Gastrocnemius medialis (tissue), 4 donors: ENCODE measurements at regions of chr14 and their contacts with region 1.

Region 1: GRCh38 chr14:69818757-69819191 is 21.7 kb upstream of the SLC10A1 start:
- DNase-seq: peak; percentile 5 to 22
- ATAC-seq: peak; percentile 62 to 86
- H3K4me3 ChIP-seq: no peak overlapping the region
- H3K27ac ChIP-seq: no peak overlapping the region
- H3K4me1 ChIP-seq: peaks cover 0 to 5% of the 10 kb centered on the region in 2 donors
- H3K27me3 ChIP-seq: no peaks in the 10 kb centered on the region
- CTCF ChIP-seq: peak; percentile 74 to 91 (median 87)
- POLR2A ChIP-seq: no peak

Region 2: DNA sequence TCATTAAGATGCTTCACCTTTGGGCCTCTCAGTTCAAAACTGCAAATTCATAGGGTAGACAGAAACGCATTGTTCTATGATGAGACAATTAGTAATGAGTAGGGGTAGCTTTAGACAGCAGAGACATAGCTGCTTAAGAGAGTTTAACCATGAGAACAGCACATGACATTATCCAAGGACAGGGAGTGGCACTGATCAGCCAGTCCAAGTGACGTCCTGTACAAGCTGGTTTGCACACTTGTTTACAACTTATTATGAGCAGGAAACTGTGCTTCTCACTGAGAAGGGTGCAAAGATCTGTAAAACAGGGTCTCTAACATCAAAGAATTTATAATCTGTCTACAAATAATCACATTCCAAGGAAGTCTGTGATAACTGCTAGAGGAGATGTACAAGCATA is 63.0 kb before region 1 on chr14:
- in situ Hi-C with region 1: no loop called
- intact Hi-C with region 1: no loop called
- DNase-seq: no peak
- ATAC-seq: no peak
- H3K4me3 ChIP-seq: no peak overlapping the region
- H3K27ac ChIP-seq: no peak overlapping the region
- H3K4me1 ChIP-seq: no peaks in the 10 kb centered on the region
- H3K27me3 ChIP-seq: no peaks in the 10 kb centered on the region
- CTCF ChIP-seq: no peak
- POLR2A ChIP-seq: no peak

Region 3: GRCh38 chr14:69879175-69880043 is 60.6 kb after region 1 on chr14 and contains the start of gene SMOC1:
- in situ Hi-C with region 1: no loop called
- intact Hi-C with region 1: loop called (anchors 2 kb)
- DNase-seq: peak; percentile 53 to 79
- ATAC-seq: peak; percentile 51 to 70
- H3K4me3 ChIP-seq: peak within 1 kb of the TSS; percentile 51 to 69 (median 60)
- H3K27ac ChIP-seq: peak within 1 kb of the TSS; percentile 64 to 83 (median 76)
- H3K4me1 ChIP-seq: peaks cover 6 to 14% of the 10 kb centered on the region in 2 donors
- H3K27me3 ChIP-seq: no peaks in the 10 kb centered on the region
- CTCF ChIP-seq: no peak
- POLR2A ChIP-seq: peak; percentile 70 to 88
- total RNA-seq, gene SMOC1: 2.7 to 10.2 (median 7.8) TPM

Region 4: DNA sequence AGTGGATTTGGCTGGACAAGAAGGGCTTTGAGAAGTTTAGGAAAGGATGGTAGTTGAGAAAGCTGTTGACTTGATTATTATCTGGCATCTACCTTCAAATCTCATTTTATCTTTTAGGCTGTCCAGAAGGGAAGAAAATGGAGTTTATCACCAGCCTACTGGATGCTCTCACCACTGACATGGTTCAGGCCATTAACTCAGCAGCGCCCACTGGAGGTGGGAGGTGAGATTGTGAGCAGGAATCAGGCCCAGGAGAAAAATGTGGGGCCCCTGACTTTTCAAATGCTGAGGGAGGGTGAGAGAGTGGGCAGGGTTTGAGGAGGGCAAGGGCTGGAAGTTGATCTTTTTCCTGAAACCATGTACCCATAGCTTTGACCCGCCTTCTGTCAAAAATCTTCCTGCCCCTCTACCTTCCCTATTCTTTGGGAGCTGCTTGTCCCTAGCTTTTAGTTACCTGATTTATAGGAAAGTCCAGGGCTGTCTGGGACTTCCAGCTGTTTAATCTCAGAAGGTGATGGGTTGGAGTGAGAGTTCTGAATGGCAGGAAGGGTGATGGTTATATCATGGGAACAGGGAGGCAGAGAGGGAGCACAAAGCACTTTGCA is 194.6 kb after region 1 on chr14:
- in situ Hi-C with region 1: no loop called
- intact Hi-C with region 1: loop called (anchors 5 kb)
- DNase-seq: no peak
- ATAC-seq: no peak
- H3K4me3 ChIP-seq: no peak overlapping the region
- H3K27ac ChIP-seq: no peak overlapping the region
- H3K4me1 ChIP-seq: no peaks in the 10 kb centered on the region
- H3K27me3 ChIP-seq: no peaks in the 10 kb centered on the region
- CTCF ChIP-seq: peak; percentile 30 to 61 (median 43)
- POLR2A ChIP-seq: no peak

Region 5: GRCh38 chr14:70027785-70028428 is 209.1 kb after region 1 on chr14:
- in situ Hi-C with region 1: loop called (anchors 5 kb)
- intact Hi-C with region 1: loop called (anchors 1 kb)
- DNase-seq: peak; percentile 44 to 51
- ATAC-seq: peak; percentile 45 to 80
- H3K4me3 ChIP-seq: no peak overlapping the region
- H3K27ac ChIP-seq: no peak overlapping the region
- H3K4me1 ChIP-seq: no peaks in the 10 kb centered on the region
- H3K27me3 ChIP-seq: no peaks in the 10 kb centered on the region
- CTCF ChIP-seq: peak; percentile 86 to 92 (median 90)
- POLR2A ChIP-seq: no peak

Region 6: GRCh38 chr14:70203686-70204085 is 384.9 kb after region 1 on chr14:
- in situ Hi-C with region 1: no loop called
- intact Hi-C with region 1: loop called (anchors 10 kb)
- DNase-seq: no peak
- ATAC-seq: no peak
- H3K4me3 ChIP-seq: no peak overlapping the region
- H3K27ac ChIP-seq: no peak overlapping the region
- H3K4me1 ChIP-seq: no peaks in the 10 kb centered on the region
- H3K27me3 ChIP-seq: no peaks in the 10 kb centered on the region
- CTCF ChIP-seq: no peak
- POLR2A ChIP-seq: no peak

Region 7: DNA sequence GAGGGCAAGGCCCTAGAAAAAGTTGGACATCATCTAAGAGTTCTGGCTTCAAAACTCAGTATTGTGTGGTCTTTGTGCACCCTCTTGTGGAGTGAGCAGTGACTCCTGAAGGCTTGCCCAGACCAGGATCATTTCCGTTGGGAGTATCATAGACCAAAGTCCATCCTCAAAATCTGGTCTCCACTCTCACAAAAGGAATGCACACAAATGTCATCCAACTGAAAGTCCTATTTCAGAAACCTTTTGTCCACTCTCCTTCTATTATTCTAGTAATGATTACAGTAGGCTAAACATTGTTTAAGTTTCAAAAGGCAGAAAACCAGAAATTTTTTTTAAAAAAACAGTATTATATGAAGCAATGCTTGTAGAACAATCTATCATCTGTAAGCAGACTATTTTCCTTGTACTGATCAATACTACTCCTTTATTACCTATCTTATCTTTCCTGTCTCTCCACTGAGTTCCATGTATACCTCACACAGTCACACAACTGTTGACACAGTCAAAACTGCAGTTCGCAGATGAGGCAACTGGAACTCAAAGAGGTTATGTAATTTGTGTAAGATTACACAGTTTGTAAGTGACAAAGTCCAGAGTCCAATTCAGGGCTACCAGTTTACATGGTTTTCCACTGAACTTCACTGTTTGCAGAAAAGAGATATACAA is 499.3 kb after region 1 on chr14:
- in situ Hi-C with region 1: no loop called
- intact Hi-C with region 1: loop called (anchors 2 kb)
- DNase-seq: no peak
- ATAC-seq: peak; percentile 50 to 64
- H3K4me3 ChIP-seq: no peak overlapping the region
- H3K27ac ChIP-seq: no peak overlapping the region
- H3K4me1 ChIP-seq: no peaks in the 10 kb centered on the region
- H3K27me3 ChIP-seq: no peaks in the 10 kb centered on the region
- CTCF ChIP-seq: peak in 3 of 5 experiments; percentile 10 to 37 (median 21)
- POLR2A ChIP-seq: no peak

Region 8: DNA sequence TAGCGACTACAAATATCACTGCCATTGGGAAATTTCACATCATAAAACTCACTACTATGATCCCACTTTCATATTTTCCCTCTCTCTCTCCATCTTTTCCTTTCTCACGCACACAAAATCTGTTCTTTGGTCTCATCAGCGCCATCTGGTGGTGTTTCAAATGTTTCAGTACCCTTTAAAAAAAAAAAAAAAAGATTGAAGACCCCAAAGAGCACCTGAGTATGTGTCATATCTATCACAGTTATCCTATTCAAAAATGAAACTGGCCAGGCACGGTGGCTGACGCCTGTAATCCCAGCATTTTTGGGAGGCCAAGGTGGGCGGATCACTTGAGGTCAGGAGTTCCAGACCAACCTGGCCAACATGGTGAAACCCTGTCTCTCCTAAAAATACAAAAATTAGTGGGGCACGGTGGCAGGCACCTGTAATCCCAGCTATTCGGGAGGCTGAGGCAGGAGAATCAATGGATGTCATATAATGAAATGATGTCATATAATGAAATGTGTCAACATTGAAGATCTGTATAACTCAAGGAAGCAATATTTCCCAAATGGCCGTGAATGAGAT is 895.4 kb after region 1 on chr14:
- in situ Hi-C with region 1: loop called in 1 of 4 experiments (anchors 25 kb)
- intact Hi-C with region 1: no loop called
- DNase-seq: no peak
- ATAC-seq: peak in 1 of 2 donors; percentile 21
- H3K4me3 ChIP-seq: no peak overlapping the region
- H3K27ac ChIP-seq: no peak overlapping the region
- H3K4me1 ChIP-seq: no peaks in the 10 kb centered on the region
- H3K27me3 ChIP-seq: no peaks in the 10 kb centered on the region
- CTCF ChIP-seq: peak; percentile 46 to 64 (median 58)
- POLR2A ChIP-seq: no peak